ENCODE measurements at regions of chr3 and their contacts with region 1.

Region 1: GRCh38 chr3:14203521-14204079 is 25.0 kb downstream of the LSM3 start:
- DNase-seq: no peak
- H3K4me3 ChIP-seq: no peak overlapping the region
- H3K27ac ChIP-seq: peak overlapping the region; percentile 70
- H3K4me1 ChIP-seq: peaks cover 25% of the 10 kb centered on the region
- H3K27me3 ChIP-seq: peaks cover under 1% of the 10 kb centered on the region
- CTCF ChIP-seq: peak; percentile 91

Region 2: GRCh38 chr3:13822042-13822441 is 381.6 kb before region 1 on chr3:
- intact Hi-C with region 1: no loop called
- DNase-seq: no peak
- H3K4me3 ChIP-seq: no peak overlapping the region
- H3K27ac ChIP-seq: no peak overlapping the region
- H3K4me1 ChIP-seq: no peaks in the 10 kb centered on the region
- H3K27me3 ChIP-seq: peaks cover 69% of the 10 kb centered on the region
- CTCF ChIP-seq: no peak

Region 3: GRCh38 chr3:13857702-13858413 is 345.7 kb before region 1 on chr3:
- intact Hi-C with region 1: no loop called
- DNase-seq: no peak
- H3K4me3 ChIP-seq: no peak overlapping the region
- H3K27ac ChIP-seq: no peak overlapping the region
- H3K4me1 ChIP-seq: no peaks in the 10 kb centered on the region
- H3K27me3 ChIP-seq: peaks cover 98% of the 10 kb centered on the region
- CTCF ChIP-seq: no peak

Region 4: GRCh38 chr3:14461748-14462324 is 258.2 kb after region 1 on chr3:
- intact Hi-C with region 1: loop called (anchors 5 kb)
- DNase-seq: peak; percentile 46
- H3K4me3 ChIP-seq: no peak overlapping the region
- H3K27ac ChIP-seq: peak overlapping the region; percentile 67
- H3K4me1 ChIP-seq: peaks cover 54% of the 10 kb centered on the region
- H3K27me3 ChIP-seq: peaks cover 68% of the 10 kb centered on the region
- CTCF ChIP-seq: peak; percentile 70